ENCODE measurements at regions of chr1 and their contacts with region 1.

Region 1: GRCh38 chr1:233113009-233113879 is 162.8 kb downstream of the NTPCR start:
- DNase-seq: peak; percentile 81 to 99
- H3K4me3 ChIP-seq: peak overlapping the region; percentile 43; the same call in 1 of the 2 replicates
- H3K27ac ChIP-seq: peak overlapping the region; percentile 99
- H3K4me1 ChIP-seq: peaks cover 49% of the 10 kb centered on the region
- H3K27me3 ChIP-seq: no peaks in the 10 kb centered on the region
- CTCF ChIP-seq: no peak

Region 2: DNA sequence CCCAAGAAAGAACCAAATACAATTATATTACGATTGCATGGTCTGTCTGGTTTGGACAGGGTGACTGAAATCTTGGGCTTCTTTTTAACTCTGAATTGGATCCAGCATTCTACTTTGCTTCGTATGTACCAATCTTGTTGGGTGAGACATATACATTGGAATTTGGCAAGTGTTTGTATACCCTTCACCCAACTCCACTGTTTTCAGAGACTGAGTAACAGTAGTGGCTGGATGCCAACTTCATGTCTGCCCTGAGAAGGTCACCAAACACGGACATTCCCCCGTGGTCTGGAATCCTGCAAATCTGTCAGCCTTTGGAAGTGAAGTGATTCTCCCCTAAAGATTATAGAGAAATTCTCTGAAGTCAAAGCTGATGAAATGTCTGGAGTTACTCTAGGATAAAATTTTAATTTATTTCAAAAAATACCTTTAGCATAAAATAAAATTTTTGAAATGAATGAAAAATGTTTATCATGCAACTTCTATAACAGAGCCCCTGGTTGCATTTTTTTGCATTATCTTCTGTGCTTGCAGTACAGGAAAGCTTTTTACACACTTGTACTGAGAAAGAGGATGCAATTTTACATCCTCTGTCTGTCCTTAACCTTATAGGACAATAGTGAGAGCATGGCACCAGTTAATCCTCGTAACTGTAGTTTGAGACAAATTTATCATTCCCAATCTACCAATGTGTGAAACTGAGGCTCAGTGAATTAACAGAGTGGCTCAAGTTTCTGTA is 1284.9 kb before region 1 on chr1:
- CTCF ChIA-PET with region 1: no interaction called
- POLR2A ChIA-PET with region 1: no interaction called
- intact Hi-C with region 1: loop called (anchors 10 kb)
- DNase-seq: peak; percentile 71 to 96
- H3K4me3 ChIP-seq: peak overlapping the region; percentile 19; the same call in 1 of the 2 replicates
- H3K27ac ChIP-seq: peak overlapping the region; percentile 89
- H3K4me1 ChIP-seq: peaks cover 38% of the 10 kb centered on the region
- H3K27me3 ChIP-seq: no peaks in the 10 kb centered on the region
- CTCF ChIP-seq: no peak

Region 3: GRCh38 chr1:232950197-232951176 is 162.8 kb before region 1 on chr1 and contains the start of gene NTPCR:
- CTCF ChIA-PET with region 1: no interaction called
- POLR2A ChIA-PET with region 1: no interaction called
- intact Hi-C with region 1: loop called (anchors 1 kb)
- DNase-seq: peak; percentile 74 to 93
- H3K4me3 ChIP-seq: peak within 1 kb of the TSS; percentile 78
- H3K27ac ChIP-seq: peak within 1 kb of the TSS; percentile 45
- H3K4me1 ChIP-seq: peaks cover 14% of the 10 kb centered on the region
- H3K27me3 ChIP-seq: no peaks in the 10 kb centered on the region
- CTCF ChIP-seq: no peak; the same call in 1 of the 2 replicates
- total RNA-seq, gene NTPCR: 45.3 and 55.6 TPM in 2 replicates

Measured in PC-9 (cell line).